CD14-positive monocyte (primary cell): ENCODE measurements at regions of chr17 and their contacts with region 1.

Region 1: DNA sequence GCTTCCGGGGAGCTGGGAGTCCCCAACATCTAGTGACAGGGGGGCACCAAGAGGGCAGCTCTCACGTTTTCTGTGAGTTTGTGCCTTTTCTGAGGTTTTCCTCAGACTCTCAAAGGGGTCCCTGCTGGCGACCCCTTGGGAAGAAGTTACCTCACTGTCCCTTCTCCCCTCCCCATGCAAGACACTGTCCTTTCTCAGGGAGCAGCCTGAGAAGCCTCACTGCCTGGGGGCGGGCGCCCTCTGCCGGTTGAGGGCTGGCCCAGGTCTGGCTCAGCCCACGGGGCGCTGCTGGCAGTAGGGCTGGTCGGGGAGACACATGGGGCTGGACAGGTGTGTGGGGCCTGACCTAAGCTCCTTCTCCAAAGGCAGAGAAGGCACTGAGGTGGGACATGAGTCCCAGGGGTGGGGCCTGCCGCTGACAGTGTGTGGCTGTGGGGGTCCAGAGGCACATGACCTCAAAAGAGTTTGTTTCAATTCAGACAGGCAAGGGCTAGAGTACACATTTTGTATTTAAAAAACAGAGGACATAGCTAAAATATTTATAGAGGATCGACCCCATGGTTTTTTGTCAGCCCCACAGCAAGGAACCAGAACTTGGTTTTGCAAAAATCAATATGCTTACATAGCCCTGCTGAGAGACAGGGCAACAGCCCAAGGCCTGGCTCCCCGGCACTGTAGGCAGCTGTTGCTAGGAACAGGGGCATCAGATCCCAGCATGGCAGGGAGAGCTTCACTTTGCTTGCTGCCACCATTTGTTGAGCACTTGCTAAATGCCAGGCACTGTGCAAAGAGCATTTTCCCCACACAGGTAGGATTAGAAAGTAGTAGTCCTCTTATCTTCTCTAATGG is 18.5 kb upstream of the ALDH3A1 start:
- DNase-seq: peak; percentile 53 to 67 (median 65)
- H3K4me3 ChIP-seq: no peak overlapping the region
- H3K4me3 Mint-ChIP-seq: no peak overlapping the region
- H3K27ac ChIP-seq: no peak overlapping the region
- H3K27ac Mint-ChIP-seq: no peak overlapping the region
- H3K4me1 ChIP-seq: no peaks in the 10 kb centered on the region
- H3K4me1 Mint-ChIP-seq: peaks cover 13% of the 10 kb centered on the region
- H3K27me3 ChIP-seq: no peaks in the 10 kb centered on the region
- H3K27me3 Mint-ChIP-seq: peaks cover 3 to 5% (median 4%) of the 10 kb centered on the region in 3 donors
- CTCF ChIP-seq: peak; percentile 97

Region 2: GRCh38 chr17:19513897-19514488 is 252.7 kb before region 1 on chr17:
- intact Hi-C with region 1: loop called (anchors 1 to 5 kb)
- DNase-seq: peak; percentile 63 to 70 (median 70)
- H3K4me3 ChIP-seq: no peak overlapping the region
- H3K4me3 Mint-ChIP-seq: no peak overlapping the region
- H3K27ac ChIP-seq: no peak overlapping the region
- H3K27ac Mint-ChIP-seq: peak overlapping the region in 2 of 7 donors; percentile 36 to 65
- H3K4me1 ChIP-seq: peaks cover 0 to under 1% of the 10 kb centered on the region in 2 donors
- H3K4me1 Mint-ChIP-seq: peaks cover 8% of the 10 kb centered on the region
- H3K27me3 ChIP-seq: no peaks in the 10 kb centered on the region
- H3K27me3 Mint-ChIP-seq: peaks cover 0 to 2% (median 0%) of the 10 kb centered on the region in 3 donors
- CTCF ChIP-seq: peak; percentile 96

Region 3: DNA sequence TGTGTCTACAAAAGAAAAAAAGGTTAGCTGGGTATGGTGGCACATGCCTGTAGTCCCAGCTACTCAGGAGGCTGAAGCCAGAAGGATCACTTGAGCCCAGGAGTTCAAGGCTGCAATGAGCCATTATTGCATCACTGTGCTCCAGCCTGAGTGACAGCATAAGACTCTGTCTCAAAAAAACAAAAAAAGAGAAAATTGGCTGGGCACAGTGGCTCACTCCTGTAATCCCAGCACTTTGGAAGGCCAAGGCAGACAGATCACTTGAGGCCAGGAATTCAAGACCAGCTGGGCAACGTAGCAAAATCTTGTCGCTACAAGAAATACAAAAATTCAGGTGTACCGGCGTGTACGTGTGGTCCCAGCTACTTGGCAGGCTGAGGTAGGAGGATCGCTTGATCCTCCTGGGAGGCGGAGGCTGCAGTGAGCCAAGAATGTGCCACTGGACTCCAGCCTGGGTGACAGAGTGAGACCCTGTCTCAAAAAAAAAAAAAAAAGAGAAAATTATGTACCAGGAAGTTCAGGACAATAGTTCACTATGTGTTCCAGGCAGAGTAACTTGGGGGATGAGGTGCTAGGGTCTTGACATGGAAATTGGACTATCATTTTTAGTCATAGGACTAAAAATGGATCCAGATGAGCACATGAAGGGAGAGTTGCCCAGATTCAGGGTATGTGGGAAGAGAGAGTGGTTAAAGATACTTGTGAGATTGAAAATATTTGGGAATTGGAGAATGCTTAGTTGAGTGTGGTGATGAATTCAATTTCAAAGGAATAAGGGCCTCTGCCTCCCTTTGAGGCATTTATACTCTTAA is 107.1 kb before region 1 on chr17:
- intact Hi-C with region 1: loop called in 1 of 2 experiments (anchors 5 kb)
- DNase-seq: no peak
- H3K4me3 ChIP-seq: no peak overlapping the region
- H3K4me3 Mint-ChIP-seq: no peak overlapping the region
- H3K27ac ChIP-seq: no peak overlapping the region
- H3K27ac Mint-ChIP-seq: peak overlapping the region in 1 of 7 donors; percentile 30
- H3K4me1 ChIP-seq: peaks cover 0 to 19% of the 10 kb centered on the region in 2 donors
- H3K4me1 Mint-ChIP-seq: peaks cover 23% of the 10 kb centered on the region
- H3K27me3 ChIP-seq: no peaks in the 10 kb centered on the region
- H3K27me3 Mint-ChIP-seq: peaks cover 0 to 2% (median 0%) of the 10 kb centered on the region in 3 donors
- CTCF ChIP-seq: no peak

Region 4: DNA sequence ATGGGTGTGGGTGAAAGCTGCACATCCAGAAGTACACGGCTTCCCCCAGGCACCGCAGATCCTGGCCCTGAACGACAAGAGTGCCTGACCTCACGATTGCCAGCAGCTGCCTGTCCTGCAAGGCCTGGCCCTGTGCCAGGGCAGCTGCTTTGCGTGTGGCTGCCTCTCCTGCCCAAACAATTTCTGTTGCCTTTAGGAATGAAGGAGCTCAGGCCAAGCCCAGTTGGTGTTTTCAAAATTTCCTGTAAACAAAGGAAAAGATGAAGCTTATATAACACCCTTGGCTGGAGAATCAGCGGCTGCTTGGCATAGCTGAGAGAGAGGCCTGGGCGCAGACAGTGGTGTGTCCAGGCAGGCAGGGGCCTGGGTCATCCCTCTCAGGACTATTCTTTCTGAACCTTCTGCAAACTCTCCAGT is 38.6 kb before region 1 on chr17:
- intact Hi-C with region 1: loop called in 1 of 2 experiments (anchors 5 kb)
- DNase-seq: peak; percentile 27 to 47 (median 29)
- H3K4me3 ChIP-seq: no peak overlapping the region
- H3K4me3 Mint-ChIP-seq: no peak overlapping the region
- H3K27ac ChIP-seq: peak overlapping the region in 1 of 2 donors; percentile 4
- H3K27ac Mint-ChIP-seq: peak overlapping the region in 4 of 7 donors; percentile 16 to 68 (median 58)
- H3K4me1 ChIP-seq: peaks cover 38 to 44% of the 10 kb centered on the region in 2 donors
- H3K4me1 Mint-ChIP-seq: peaks cover 48% of the 10 kb centered on the region
- H3K27me3 ChIP-seq: no peaks in the 10 kb centered on the region
- H3K27me3 Mint-ChIP-seq: no peaks in the 10 kb centered on the region
- CTCF ChIP-seq: no peak